ENCODE measurements at regions of chr3 and their contacts with region 1.

Region 1: GRCh38 chr3:179158336-179159039 is 10.3 kb downstream of the PIK3CA start:
- DNase-seq: no peak
- H3K4me3 ChIP-seq: no peak overlapping the region
- H3K27ac ChIP-seq: no peak overlapping the region
- H3K4me1 ChIP-seq: peaks cover 9% of the 10 kb centered on the region in 2 donors
- H3K27me3 ChIP-seq: no peaks in the 10 kb centered on the region
- CTCF ChIP-seq: no peak
- POLR2A ChIP-seq: no peak

Region 2: DNA sequence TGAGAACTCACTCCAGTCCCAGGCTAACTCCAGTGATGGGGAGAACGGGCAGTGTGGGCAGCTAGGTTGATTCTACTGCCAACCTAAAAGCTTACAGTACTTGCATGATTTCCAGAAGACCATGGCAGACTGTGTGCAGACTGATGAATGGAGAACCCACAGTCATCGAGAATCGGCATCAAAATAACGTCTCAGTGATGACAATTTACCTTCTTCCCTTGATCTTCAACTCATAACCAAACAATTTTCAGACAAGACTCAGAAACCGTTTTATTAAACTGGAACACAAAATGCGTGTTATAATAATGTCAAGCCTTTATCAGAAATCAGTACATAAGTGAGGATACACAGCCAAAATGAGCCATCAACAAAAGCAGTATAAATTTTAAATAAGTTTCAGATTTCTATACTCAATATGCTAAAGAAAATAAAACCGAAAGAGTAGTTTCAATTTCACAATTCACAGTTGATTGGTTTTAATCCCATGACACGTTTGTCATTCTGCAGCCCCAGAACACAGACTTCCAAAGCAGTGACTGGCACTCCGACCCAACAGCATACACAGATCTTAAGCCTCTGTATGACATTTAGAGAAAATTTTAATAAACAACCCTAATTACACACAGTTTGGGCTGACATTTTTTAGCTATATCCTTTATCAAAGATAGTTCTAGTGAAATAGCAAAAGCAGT is 141.4 kb before region 1 on chr3:
- intact Hi-C with region 1: no loop called
- DNase-seq: no peak
- H3K4me3 ChIP-seq: no peak overlapping the region
- H3K27ac ChIP-seq: no peak overlapping the region
- H3K4me1 ChIP-seq: peaks cover 0 to 6% of the 10 kb centered on the region in 2 donors
- H3K27me3 ChIP-seq: no peaks in the 10 kb centered on the region
- CTCF ChIP-seq: no peak
- POLR2A ChIP-seq: no peak

Region 3: GRCh38 chr3:179200790-179201189 is 42.3 kb after region 1 on chr3:
- intact Hi-C with region 1: loop called (anchors 10 kb)
- DNase-seq: no peak
- H3K4me3 ChIP-seq: no peak overlapping the region
- H3K27ac ChIP-seq: no peak overlapping the region
- H3K4me1 ChIP-seq: peaks cover 0 to 10% of the 10 kb centered on the region in 2 donors
- H3K27me3 ChIP-seq: no peaks in the 10 kb centered on the region
- CTCF ChIP-seq: no peak
- POLR2A ChIP-seq: no peak

Region 4: GRCh38 chr3:179292450-179292849 is 134.0 kb after region 1 on chr3:
- intact Hi-C with region 1: no loop called
- DNase-seq: no peak
- H3K4me3 ChIP-seq: no peak overlapping the region
- H3K27ac ChIP-seq: no peak overlapping the region
- H3K4me1 ChIP-seq: no peaks in the 10 kb centered on the region
- H3K27me3 ChIP-seq: no peaks in the 10 kb centered on the region
- CTCF ChIP-seq: no peak
- POLR2A ChIP-seq: no peak

Region 5: GRCh38 chr3:179416681-179417080 is 258.2 kb after region 1 on chr3:
- intact Hi-C with region 1: no loop called
- DNase-seq: no peak
- H3K4me3 ChIP-seq: no peak overlapping the region
- H3K27ac ChIP-seq: no peak overlapping the region
- H3K4me1 ChIP-seq: no peaks in the 10 kb centered on the region
- H3K27me3 ChIP-seq: no peaks in the 10 kb centered on the region
- CTCF ChIP-seq: no peak
- POLR2A ChIP-seq: no peak

Measured in thyroid gland (tissue), 4 donors.